ENCODE measurements at regions of chr1 and their contacts with region 1.

Region 1: GRCh38 chr1:200802865-200803512 is 64.3 kb downstream of the CAMSAP2 start:
- DNase-seq: peak; percentile 84
- H3K4me3 ChIP-seq: no peak overlapping the region
- H3K27ac ChIP-seq: no peak overlapping the region
- H3K4me1 ChIP-seq: no peaks in the 10 kb centered on the region
- H3K27me3 ChIP-seq: no peaks in the 10 kb centered on the region
- CTCF ChIP-seq: peak; percentile 85 to 87
- POLR2A ChIP-seq: no peak

Region 2: DNA sequence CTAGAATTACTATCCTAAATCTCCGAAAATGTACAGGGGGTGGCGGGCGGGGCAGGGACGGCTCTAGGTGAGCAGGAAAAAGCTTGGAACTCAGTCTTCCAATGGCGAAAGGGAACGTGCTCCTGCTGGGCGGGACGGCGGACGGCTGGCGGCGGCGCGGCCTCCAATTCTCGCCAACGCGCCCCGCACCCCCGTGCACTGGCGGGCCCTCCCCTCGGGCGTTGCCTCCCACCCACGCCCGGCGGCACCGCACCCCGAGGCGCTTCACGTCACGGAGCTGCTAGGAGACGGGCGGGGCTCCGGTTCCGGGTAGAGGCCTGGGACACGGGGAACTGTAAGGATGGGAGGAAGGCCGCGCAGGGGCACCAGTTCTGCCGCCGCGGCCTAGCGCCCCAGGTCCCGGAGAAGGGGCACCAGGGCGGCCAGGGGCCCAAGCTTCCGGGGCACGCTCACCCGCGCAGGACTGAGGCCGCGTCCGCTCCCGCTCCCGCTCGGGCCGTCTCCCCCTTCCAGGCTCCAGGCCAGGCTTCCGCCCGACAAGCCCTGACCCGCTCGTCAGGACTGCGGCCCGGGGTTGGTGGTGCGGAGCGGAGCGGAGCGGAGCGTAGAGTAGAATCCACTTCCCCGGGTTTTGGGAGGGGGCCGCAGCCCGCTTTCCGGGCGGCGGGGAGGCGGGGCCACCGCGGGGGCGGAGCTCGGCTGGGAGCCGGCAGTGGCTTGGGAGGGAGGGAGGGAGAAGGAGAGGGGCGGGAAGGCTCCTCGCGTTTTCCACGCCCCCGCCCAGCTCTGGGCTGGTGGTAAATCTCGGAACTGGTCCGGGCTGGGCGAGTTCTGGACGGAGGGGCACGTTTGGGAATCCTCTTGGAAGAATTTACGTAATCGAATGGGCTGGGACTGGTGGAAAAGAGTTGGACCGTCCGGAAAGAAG is 133.4 kb before region 1 on chr1 and contains the start of gene DDX59:
- CTCF ChIA-PET with region 1: interaction called, 16 read pairs
- POLR2A ChIA-PET with region 1: no interaction called
- dilution Hi-C with region 1: no loop called
- intact Hi-C with region 1: loop called (anchors 1 kb)
- DNase-seq: peak; percentile 98
- H3K4me3 ChIP-seq: peak within 1 kb of the TSS; percentile 81 to 99 (median 88)
- H3K27ac ChIP-seq: peak within 1 kb of the TSS; percentile 97
- H3K4me1 ChIP-seq: peaks cover 29% of the 10 kb centered on the region
- H3K27me3 ChIP-seq: no peaks in the 10 kb centered on the region
- CTCF ChIP-seq: no peak
- POLR2A ChIP-seq: no peak
- total RNA-seq, gene DDX59: 17.6 and 17.7 TPM in 2 replicates

Region 3: GRCh38 chr1:200738740-200739498 is 64.1 kb before region 1 on chr1 and contains the start of gene CAMSAP2:
- CTCF ChIA-PET with region 1: interaction called, 6 read pairs
- POLR2A ChIA-PET with region 1: no interaction called
- dilution Hi-C with region 1: no loop called
- intact Hi-C with region 1: loop called (anchors 1 kb)
- DNase-seq: peak; percentile 90
- H3K4me3 ChIP-seq: peak within 1 kb of the TSS; percentile 70 to 95 (median 88)
- H3K27ac ChIP-seq: peak within 1 kb of the TSS; percentile 92
- H3K4me1 ChIP-seq: peaks cover 29% of the 10 kb centered on the region
- H3K27me3 ChIP-seq: no peaks in the 10 kb centered on the region
- CTCF ChIP-seq: no peak
- POLR2A ChIP-seq: peak; percentile 81
- total RNA-seq, gene CAMSAP2: 43.9 and 45.5 TPM in 2 replicates

Region 4: DNA sequence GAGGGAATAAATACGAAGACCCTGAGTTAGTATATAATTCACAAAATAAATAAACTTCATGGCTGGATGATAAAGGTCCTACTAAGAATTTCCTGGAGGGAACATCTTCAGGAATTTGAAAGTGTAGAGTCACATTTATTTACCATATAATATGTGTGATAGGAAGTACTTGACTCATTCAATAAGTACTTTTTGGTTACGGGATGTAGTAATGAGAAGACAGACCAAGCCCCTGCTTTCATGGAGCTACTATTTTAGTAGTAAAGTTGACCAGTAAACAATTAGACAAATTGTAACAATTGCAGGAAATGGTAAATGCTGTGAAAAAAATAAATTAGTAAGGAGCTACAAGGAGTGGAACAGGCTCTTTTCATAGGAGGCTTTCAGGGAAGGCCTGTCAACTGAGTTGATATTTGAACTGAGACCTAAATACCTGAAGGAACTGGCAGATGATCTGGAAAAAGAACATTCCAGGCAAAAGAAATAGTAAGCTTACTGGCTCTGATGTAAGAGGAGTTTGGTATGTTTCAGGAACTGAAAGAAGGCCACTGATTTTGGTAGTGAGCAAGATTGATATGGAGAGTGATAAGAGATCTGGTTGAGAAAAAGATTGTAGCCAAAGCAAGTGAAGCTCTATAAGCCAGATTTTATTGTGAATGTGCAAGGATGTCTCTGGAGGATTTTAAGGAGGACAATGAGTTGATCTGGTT is 28.1 kb before region 1 on chr1:
- CTCF ChIA-PET with region 1: interaction called, 16 read pairs
- POLR2A ChIA-PET with region 1: no interaction called
- dilution Hi-C with region 1: no loop called
- intact Hi-C with region 1: loop called (anchors 2 kb)
- DNase-seq: peak; percentile 18
- H3K4me3 ChIP-seq: no peak overlapping the region
- H3K27ac ChIP-seq: peak overlapping the region; percentile 11
- H3K4me1 ChIP-seq: peaks cover 19% of the 10 kb centered on the region
- H3K27me3 ChIP-seq: no peaks in the 10 kb centered on the region
- CTCF ChIP-seq: no peak
- POLR2A ChIP-seq: no peak

Region 5: GRCh38 chr1:200780545-200781369 is 22.2 kb before region 1 on chr1:
- CTCF ChIA-PET with region 1: interaction called, 16 read pairs
- POLR2A ChIA-PET with region 1: no interaction called
- dilution Hi-C with region 1: no loop called
- intact Hi-C with region 1: loop called (anchors 2 kb)
- DNase-seq: peak; percentile 59
- H3K4me3 ChIP-seq: peak overlapping the region in 1 of 3 experiments; percentile 42
- H3K27ac ChIP-seq: no peak overlapping the region
- H3K4me1 ChIP-seq: peaks cover 17% of the 10 kb centered on the region
- H3K27me3 ChIP-seq: no peaks in the 10 kb centered on the region
- CTCF ChIP-seq: no peak
- POLR2A ChIP-seq: no peak

Region 6: GRCh38 chr1:200890818-200891773 is 88.1 kb after region 1 on chr1:
- CTCF ChIA-PET with region 1: no interaction called
- POLR2A ChIA-PET with region 1: no interaction called
- dilution Hi-C with region 1: no loop called
- intact Hi-C with region 1: no loop called
- DNase-seq: peak; percentile 27
- H3K4me3 ChIP-seq: peak overlapping the region in 2 of 3 experiments; percentile 30 to 47
- H3K27ac ChIP-seq: no peak overlapping the region
- H3K4me1 ChIP-seq: no peaks in the 10 kb centered on the region
- H3K27me3 ChIP-seq: peaks cover 39 to 46% of the 10 kb centered on the region in 2 experiments
- CTCF ChIP-seq: peak; percentile 50
- POLR2A ChIP-seq: no peak

Region 7: GRCh38 chr1:200979574-200980451 is 176.8 kb after region 1 on chr1:
- CTCF ChIA-PET with region 1: no interaction called
- POLR2A ChIA-PET with region 1: no interaction called
- dilution Hi-C with region 1: no loop called
- intact Hi-C with region 1: no loop called
- DNase-seq: peak; percentile 4
- H3K4me3 ChIP-seq: no peak overlapping the region
- H3K27ac ChIP-seq: no peak overlapping the region
- H3K4me1 ChIP-seq: no peaks in the 10 kb centered on the region
- H3K27me3 ChIP-seq: no peaks in the 10 kb centered on the region
- CTCF ChIP-seq: peak; percentile 50 to 69
- POLR2A ChIP-seq: no peak

Measured in endothelial cell of umbilical vein (primary cell).